ENCODE measurements at regions of chr18 and their contacts with region 1.

Region 1: DNA sequence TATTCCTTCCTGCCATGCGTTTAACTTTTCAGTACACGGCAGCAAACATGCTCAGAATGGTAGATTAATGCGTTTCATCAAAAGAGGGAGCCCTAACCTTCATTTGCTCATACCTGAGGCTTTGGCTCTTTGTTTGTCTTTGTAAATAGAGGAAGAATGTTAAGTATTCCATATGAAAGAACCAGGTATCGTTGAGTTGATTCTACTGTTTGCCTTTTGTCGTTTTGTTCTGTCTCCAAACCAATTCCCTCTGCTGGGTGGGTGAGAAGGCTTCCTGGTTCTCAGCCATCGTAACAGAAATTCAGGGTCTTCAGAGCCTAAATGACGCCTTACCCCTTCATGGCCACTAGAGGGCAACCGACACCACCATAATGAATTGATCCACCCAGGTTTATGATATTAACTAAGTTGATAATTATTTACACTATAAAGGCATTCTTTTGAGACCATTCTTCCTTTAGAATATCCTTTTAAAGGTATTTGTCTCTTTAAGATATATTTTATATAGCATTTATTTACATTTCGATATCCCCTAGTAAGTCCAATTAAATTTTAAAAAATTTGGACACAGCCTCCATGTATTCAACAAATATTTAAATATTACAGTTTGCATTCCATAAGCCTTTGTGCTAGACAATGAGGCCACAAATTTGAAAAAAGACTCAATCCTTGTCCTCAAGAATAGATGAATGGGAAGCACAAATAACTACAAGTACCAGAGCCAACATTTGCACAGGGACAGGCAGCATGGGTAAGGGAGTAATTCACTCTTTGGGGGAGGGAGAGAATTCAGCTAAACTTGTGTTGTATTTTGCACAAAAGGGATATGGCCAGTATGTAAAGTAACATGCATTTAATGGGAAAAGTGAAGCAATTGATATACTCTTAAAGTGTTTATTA is 48.1 kb downstream of the TIMM21 start:
- DNase-seq: no peak
- ATAC-seq: peak; percentile 64 to 71 (median 68)
- H3K4me3 ChIP-seq: peak overlapping the region in 2 of 3 donors; percentile 30 to 41
- H3K27ac ChIP-seq: peak overlapping the region in 2 of 3 donors; percentile 84 to 87
- H3K4me1 ChIP-seq: peaks cover 0 to 22% (median 10%) of the 10 kb centered on the region in 4 donors
- H3K27me3 ChIP-seq: no peaks in the 10 kb centered on the region
- CTCF ChIP-seq: peak; percentile 88 to 92 (median 90)
- POLR2A ChIP-seq: no peak

Region 2: DNA sequence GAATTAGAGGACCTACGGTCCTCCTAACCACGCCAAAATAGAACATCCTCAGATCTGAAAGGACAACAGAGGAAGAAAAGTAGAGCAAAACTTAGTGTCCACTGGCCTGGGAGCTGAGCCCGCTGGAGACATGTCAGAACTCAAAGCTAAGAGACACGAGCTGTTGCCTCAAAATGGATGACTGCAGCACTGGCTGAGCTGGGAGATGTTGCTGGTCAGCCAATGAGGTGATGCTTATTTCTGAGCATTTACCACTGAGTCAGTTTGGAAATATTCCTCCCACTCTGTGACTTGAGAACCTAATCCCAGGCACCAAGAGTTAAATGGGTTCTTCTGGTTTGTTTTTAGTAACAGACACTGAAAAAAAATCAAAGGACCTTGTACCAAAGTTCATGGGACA is 81.4 kb before region 1 on chr18:
- intact Hi-C with region 1: no loop called
- DNase-seq: no peak
- ATAC-seq: no peak
- H3K4me3 ChIP-seq: no peak overlapping the region
- H3K27ac ChIP-seq: no peak overlapping the region
- H3K4me1 ChIP-seq: no peaks in the 10 kb centered on the region
- H3K27me3 ChIP-seq: no peaks in the 10 kb centered on the region
- CTCF ChIP-seq: no peak
- POLR2A ChIP-seq: no peak

Region 3: GRCh38 chr18:74242438-74243096 is 46.1 kb after region 1 on chr18:
- intact Hi-C with region 1: no loop called
- DNase-seq: peak; percentile 73 to 92 (median 85)
- ATAC-seq: peak; percentile 68 to 81 (median 76)
- H3K4me3 ChIP-seq: no peak overlapping the region
- H3K27ac ChIP-seq: peak overlapping the region; percentile 33 to 89 (median 76)
- H3K4me1 ChIP-seq: peaks cover 0 to 53% (median 24%) of the 10 kb centered on the region in 4 donors
- H3K27me3 ChIP-seq: no peaks in the 10 kb centered on the region
- CTCF ChIP-seq: peak in 3 of 4 donors; percentile 16 to 40 (median 22)
- POLR2A ChIP-seq: no peak

Region 4: GRCh38 chr18:74331404-74331803 is 134.9 kb after region 1 on chr18:
- intact Hi-C with region 1: loop called in 1 of 2 experiments (anchors 10 kb)
- DNase-seq: peak in 1 of 3 donors; percentile 49
- ATAC-seq: peak; percentile 98 to 100 (median 99)
- H3K4me3 ChIP-seq: no peak overlapping the region
- H3K27ac ChIP-seq: peak overlapping the region in 1 of 3 donors; percentile 11
- H3K4me1 ChIP-seq: peaks cover 0 to 10% (median 3%) of the 10 kb centered on the region in 4 donors
- H3K27me3 ChIP-seq: no peaks in the 10 kb centered on the region
- CTCF ChIP-seq: peak; percentile 65 to 70 (median 68)
- POLR2A ChIP-seq: no peak

Region 5: DNA sequence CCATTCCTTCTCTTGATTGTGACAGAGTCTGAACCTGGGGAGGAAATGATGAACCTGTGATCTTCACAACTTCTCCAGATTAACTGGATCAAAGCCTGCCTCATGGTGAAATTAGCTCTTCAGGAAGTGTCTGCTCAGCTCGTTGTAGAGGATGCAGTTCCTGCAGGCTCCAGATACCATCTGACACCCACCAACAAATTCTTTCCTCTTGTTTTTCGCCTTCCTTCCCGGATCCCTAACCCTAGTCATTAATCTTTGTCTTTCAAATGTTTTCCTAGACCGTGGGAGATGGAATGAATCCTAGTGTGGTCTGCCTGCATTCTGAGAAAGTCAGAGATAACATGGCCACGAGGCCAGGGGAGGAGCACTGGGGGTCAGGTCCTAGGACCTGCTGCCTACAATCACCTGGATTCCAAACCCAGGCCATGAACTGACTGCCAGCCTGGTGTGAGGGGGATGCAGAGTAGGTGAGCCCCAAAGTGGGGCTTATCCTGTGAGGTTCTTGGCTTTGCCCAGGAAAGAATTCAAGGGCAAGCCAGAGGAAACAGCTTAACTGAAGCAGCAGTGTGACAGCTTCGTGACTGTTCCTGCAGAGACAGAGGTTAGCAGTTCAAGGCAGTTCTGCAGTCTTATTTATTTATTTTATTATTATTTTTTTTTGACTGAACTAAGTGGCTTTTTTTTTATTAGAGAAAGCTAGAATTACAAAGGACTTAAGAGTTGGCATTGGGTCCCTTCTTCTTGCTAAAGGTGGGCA is 192.9 kb after region 1 on chr18:
- intact Hi-C with region 1: no loop called
- DNase-seq: no peak
- ATAC-seq: peak; percentile 54 to 74 (median 64)
- H3K4me3 ChIP-seq: no peak overlapping the region
- H3K27ac ChIP-seq: no peak overlapping the region
- H3K4me1 ChIP-seq: no peaks in the 10 kb centered on the region
- H3K27me3 ChIP-seq: no peaks in the 10 kb centered on the region
- CTCF ChIP-seq: no peak
- POLR2A ChIP-seq: no peak

Region 6: DNA sequence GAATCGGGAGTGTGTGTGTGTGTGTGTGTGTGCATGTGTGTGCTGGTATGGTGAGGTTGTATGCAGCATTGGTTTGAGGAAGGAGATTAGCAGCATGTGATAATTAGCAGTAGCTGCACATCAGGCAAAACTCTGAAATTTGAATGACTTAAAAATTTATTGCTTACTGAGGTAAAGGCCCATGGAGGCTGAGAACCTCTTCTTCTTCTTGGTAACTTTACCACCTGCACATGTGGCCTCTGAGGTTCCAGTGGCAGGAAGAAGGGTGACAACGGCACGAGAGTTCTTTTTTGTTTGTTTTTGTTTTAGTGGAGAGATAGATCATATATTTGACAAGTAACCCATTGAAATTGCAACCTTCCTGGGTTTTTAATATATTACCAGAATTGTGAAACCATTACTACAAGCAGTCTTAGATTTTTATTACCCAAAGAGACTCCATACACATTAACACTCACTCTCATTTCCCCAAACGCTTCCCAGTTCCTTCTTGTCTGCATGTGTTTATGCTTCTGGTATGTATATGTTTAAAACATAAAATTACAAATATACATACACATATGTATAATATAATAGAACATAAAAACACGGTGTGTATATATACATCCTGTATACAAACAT is 720.4 kb after region 1 on chr18:
- intact Hi-C with region 1: no loop called
- DNase-seq: no peak
- ATAC-seq: no peak
- H3K4me3 ChIP-seq: no peak overlapping the region
- H3K27ac ChIP-seq: no peak overlapping the region
- H3K4me1 ChIP-seq: no peaks in the 10 kb centered on the region
- H3K27me3 ChIP-seq: no peaks in the 10 kb centered on the region
- CTCF ChIP-seq: no peak
- POLR2A ChIP-seq: no peak